ENCODE measurements at regions of chr6 and their contacts with region 1.

Region 1: DNA sequence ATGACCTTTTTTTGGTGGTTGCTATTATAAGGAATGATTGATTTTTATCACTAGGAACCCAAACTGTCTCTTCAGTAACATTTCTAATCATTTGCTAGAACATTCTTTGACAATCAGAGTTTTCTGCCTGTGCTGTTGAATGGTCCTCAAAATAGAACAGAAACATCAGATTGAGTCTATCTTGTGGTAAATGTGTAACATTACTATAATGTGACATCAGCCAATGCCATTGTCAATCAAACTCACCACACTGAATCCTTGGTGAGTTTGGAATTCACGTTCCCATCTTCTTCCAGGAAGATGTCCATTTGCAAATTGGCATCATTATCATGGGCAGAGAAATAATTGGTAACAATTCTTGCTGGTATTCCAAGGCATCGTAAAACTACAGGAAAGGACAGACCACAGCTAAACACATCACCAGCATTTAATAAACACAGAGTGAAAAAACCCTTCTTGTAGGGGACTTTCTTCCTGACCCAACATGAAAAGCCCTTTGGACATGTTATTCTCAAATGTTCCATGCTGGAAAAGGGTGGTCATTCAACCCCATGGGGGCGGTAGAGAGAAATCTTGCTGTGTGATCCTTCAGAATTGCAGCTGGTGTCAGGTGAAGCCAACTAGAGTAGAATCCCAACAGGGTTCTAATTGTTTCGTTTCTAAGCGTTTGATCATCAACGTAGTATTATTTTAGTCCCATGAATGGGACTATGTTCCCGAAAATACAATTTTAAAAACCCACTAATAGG is 98.5 kb downstream of the F13A1 start:
- DNase-seq: no peak
- ATAC-seq: peak; percentile 68
- H3K4me3 ChIP-seq: no peak overlapping the region
- H3K27ac ChIP-seq: no peak overlapping the region
- H3K4me1 ChIP-seq: no peaks in the 10 kb centered on the region
- H3K27me3 ChIP-seq: no peaks in the 10 kb centered on the region
- CTCF ChIP-seq: peak; percentile 33 to 44 (median 33); a peak in 4 of 6 replicates
- EP300 ChIP-seq: no peak
- POLR2A ChIP-seq: no peak
- RAD21 ChIP-seq: peak; percentile 52

Region 2: GRCh38 chr6:5840509-5841390 is 381.2 kb before region 1 on chr6:
- CTCF ChIA-PET with region 1: no interaction called
- POLR2A ChIA-PET with region 1: no interaction called
- RAD21 ChIA-PET with region 1: no interaction called
- SMC1A ChIA-PET with region 1: no interaction called
- in situ Hi-C with region 1: no loop called
- intact Hi-C with region 1: no loop called
- DNase-seq: no peak
- ATAC-seq: no peak
- H3K4me3 ChIP-seq: no peak overlapping the region
- H3K27ac ChIP-seq: no peak overlapping the region
- H3K4me1 ChIP-seq: no peaks in the 10 kb centered on the region
- H3K27me3 ChIP-seq: no peaks in the 10 kb centered on the region; a peak in 1 of 4 replicates
- CTCF ChIP-seq: no peak
- EP300 ChIP-seq: no peak
- POLR2A ChIP-seq: no peak
- RAD21 ChIP-seq: no peak

Region 3: GRCh38 chr6:6236730-6237469 is 14.9 kb after region 1 on chr6:
- CTCF ChIA-PET with region 1: interaction called, 14 read pairs
- POLR2A ChIA-PET with region 1: no interaction called
- RAD21 ChIA-PET with region 1: no interaction called
- SMC1A ChIA-PET with region 1: interaction called, 4 read pairs
- in situ Hi-C with region 1: no loop called
- intact Hi-C with region 1: no loop called
- DNase-seq: no peak
- ATAC-seq: no peak
- H3K4me3 ChIP-seq: no peak overlapping the region
- H3K27ac ChIP-seq: no peak overlapping the region
- H3K4me1 ChIP-seq: no peaks in the 10 kb centered on the region
- H3K27me3 ChIP-seq: no peaks in the 10 kb centered on the region
- CTCF ChIP-seq: no peak
- EP300 ChIP-seq: no peak
- POLR2A ChIP-seq: no peak
- RAD21 ChIP-seq: no peak

Region 4: GRCh38 chr6:6248651-6249050 is 26.7 kb after region 1 on chr6:
- CTCF ChIA-PET with region 1: interaction called, 7 read pairs
- POLR2A ChIA-PET with region 1: no interaction called
- RAD21 ChIA-PET with region 1: no interaction called
- SMC1A ChIA-PET with region 1: interaction called, 15 read pairs
- in situ Hi-C with region 1: no loop called
- intact Hi-C with region 1: no loop called
- DNase-seq: no peak
- ATAC-seq: peak; percentile 62
- H3K4me3 ChIP-seq: no peak overlapping the region
- H3K27ac ChIP-seq: no peak overlapping the region
- H3K4me1 ChIP-seq: no peaks in the 10 kb centered on the region
- H3K27me3 ChIP-seq: no peaks in the 10 kb centered on the region
- CTCF ChIP-seq: no peak
- EP300 ChIP-seq: no peak
- POLR2A ChIP-seq: no peak
- RAD21 ChIP-seq: no peak

Measured in GM12878 (cell line).